Naive thymus-derived CD4-positive, alpha-beta T cell (primary cell): ENCODE measurements at regions of chr19 and their contacts with region 1.

Region 1: DNA sequence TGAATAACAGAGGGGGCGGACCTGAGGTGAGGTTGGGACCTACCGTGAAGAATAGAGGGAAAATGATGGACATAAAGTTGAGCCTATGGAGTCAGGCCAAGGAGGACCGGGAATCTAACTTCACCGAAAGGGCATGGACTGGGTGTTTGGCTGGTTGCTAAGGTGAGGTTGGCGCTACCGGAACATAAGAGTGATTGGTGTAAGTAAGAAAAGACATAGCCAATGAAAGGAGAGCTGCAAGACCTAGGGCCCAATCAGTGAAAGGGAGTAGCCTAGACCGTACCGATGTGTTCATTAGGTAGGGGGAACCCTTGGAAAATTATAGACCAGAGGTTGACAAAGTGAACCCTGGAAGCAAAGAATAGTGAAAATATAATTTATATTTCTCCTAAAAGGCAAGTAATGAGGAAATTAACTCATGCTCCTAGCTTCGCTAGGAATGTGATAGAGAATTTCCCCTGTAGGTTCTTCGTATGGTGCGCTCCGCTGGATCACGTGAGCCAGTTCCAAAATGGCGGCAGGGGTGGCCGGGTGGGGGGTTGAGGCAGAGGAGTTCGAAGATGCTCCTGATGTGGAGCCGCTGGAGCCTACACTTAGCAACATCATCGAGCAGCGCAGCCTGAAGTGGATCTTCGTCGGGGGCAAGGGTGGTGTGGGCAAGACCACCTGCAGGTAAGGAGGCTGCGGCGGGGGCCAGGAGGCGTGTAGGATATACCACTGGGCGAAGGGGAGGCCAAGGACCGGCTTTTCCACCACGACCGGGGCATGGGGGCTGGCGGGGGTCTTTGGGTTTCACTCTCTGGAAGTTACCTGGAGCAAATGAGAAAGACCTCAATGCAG is at the start of gene GET3:
- DNase-seq: peak; percentile 53 to 92 (median 86)
- ATAC-seq: peak; percentile 85
- H3K4me3 ChIP-seq: peak within 1 kb of the TSS; percentile 76
- H3K4me3 Mint-ChIP-seq: peak within 1 kb of the TSS; percentile 96 to 100 (median 99)
- H3K27ac ChIP-seq: peak within 1 kb of the TSS; percentile 93
- H3K27ac Mint-ChIP-seq: peak within 1 kb of the TSS; percentile 90 to 99 (median 97)
- H3K4me1 ChIP-seq: peaks cover 27 to 30% of the 10 kb centered on the region in 2 donors
- H3K4me1 Mint-ChIP-seq: peaks cover 29 to 42% (median 38%) of the 10 kb centered on the region in 7 donors
- H3K27me3 ChIP-seq: no peaks in the 10 kb centered on the region
- H3K27me3 Mint-ChIP-seq: no peaks in the 10 kb centered on the region
- total RNA-seq, gene GET3: 22.6 to 60.3 (median 27.0) TPM

Region 2: DNA sequence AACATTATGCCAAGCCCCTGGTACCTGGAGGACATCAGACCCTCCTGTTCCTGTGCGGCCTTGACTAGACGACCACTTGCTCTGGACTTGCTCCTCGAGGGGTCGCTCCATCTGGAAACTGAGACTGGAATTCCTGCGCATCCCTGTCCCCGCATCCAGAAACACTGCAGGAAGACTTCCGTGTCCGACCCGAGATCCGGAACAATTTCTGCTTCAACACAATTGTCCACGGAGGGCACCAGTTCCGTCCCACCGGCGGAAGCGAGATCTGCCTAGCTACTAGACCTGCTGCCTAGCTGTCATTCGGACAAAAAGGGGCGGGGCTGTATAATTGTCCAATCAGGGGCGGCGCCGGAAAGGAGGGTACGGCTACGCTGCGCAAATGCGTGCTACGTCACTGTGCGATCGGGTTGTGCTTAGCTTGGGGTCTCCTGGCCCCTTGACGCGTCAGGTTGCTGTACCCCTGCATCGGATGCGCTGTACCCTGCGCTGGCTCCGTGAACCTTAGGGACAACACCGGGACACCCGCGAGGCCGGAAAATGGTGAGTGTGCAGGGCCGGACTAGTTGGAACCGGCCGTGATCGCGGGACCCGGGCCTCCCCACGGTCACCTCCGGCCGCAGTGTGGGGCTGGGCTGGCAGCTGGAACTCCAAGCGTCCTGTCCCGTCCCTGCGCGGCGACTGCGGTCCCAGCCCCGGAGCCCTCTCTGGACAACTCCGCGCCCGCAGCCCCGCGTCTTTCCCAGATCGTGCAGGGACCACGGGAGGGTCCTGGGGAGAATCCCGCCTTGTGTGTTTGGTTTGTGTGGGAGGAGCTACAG is 126.5 kb before region 1 on chr19 and contains the starts of genes ZNF490 and ZNF791:
- CTCF ChIA-PET with region 1: no interaction called
- POLR2A ChIA-PET with region 1: interaction called, 3 read pairs
- intact Hi-C with region 1: loop called in 1 of 2 experiments (anchors 5 kb)
- DNase-seq: peak; percentile 81 to 97 (median 94)
- ATAC-seq: peak; percentile 94
- H3K4me3 ChIP-seq: peak within 1 kb of the TSS; percentile 71
- H3K4me3 Mint-ChIP-seq: peak within 1 kb of the TSS; percentile 94 to 100 (median 100)
- H3K27ac ChIP-seq: peak within 1 kb of the TSS; percentile 95
- H3K27ac Mint-ChIP-seq: peak within 1 kb of the TSS; percentile 97 to 100 (median 99)
- H3K4me1 ChIP-seq: peaks cover 24 to 41% of the 10 kb centered on the region in 2 donors
- H3K4me1 Mint-ChIP-seq: peaks cover 16 to 48% (median 36%) of the 10 kb centered on the region in 7 donors
- H3K27me3 ChIP-seq: no peaks in the 10 kb centered on the region
- H3K27me3 Mint-ChIP-seq: no peaks in the 10 kb centered on the region
- total RNA-seq, gene ZNF490: 10.3 to 14.9 (median 11.6) TPM
- total RNA-seq, gene ZNF791: 29.1 to 53.3 (median 38.7) TPM

Region 3: DNA sequence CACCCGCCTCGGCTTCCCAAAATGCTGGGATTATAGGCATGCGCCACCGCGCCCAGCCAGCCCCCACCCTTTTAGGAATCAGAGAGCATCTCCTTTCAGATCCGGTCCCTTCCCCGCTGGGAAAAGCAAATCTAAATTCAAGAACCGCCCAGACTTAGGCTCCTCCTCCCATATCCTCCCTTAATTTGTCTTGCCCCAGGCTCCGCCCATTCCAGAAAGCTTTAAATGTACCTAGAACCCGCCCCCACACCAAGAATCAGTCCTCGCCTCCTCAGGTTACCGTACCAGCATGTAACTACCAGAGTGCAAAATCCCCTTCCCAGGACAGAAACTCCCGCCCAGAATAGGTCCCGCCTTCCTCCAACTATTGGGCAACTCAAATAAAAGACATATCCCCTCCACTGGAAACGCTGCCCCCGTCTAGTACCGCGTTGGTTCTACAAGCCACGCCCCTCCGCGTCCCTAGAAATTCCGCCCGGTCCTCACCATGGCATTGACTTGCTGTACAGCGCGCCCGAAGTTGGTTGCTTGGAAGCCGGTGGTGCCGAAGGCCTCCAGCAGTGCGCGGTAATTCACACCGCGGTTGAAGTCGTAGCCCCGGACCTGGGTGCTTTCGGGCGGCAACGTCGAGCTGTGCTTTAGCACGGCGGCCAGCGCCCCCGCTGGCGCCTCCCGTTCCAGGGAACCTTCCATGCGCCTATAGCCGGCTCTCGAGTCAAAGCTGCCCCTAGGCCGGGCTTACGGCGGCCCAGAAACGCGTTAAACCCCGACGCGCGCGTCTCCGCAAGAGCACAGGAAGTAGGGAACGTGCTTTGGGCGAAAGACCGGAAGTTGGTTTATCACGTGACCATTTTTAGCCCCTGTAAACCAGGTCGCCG is 55.9 kb before region 1 on chr19 and contains the start of gene DHPS:
- CTCF ChIA-PET with region 1: no interaction called
- POLR2A ChIA-PET with region 1: interaction called, 6 read pairs
- intact Hi-C with region 1: loop called (anchors 1 kb)
- DNase-seq: peak; percentile 58 to 95 (median 93)
- ATAC-seq: peak; percentile 85
- H3K4me3 ChIP-seq: peak within 1 kb of the TSS; percentile 100
- H3K4me3 Mint-ChIP-seq: peak within 1 kb of the TSS; percentile 92 to 99 (median 96)
- H3K27ac ChIP-seq: peak within 1 kb of the TSS; percentile 95
- H3K27ac Mint-ChIP-seq: peak within 1 kb of the TSS; percentile 86 to 98 (median 94)
- H3K4me1 ChIP-seq: peaks cover 6 to 19% of the 10 kb centered on the region in 2 donors
- H3K4me1 Mint-ChIP-seq: peaks cover 18 to 34% (median 26%) of the 10 kb centered on the region in 7 donors
- H3K27me3 ChIP-seq: no peaks in the 10 kb centered on the region
- H3K27me3 Mint-ChIP-seq: no peaks in the 10 kb centered on the region
- total RNA-seq, gene DHPS: 125 to 223 (median 174) TPM

Region 4: GRCh38 chr19:12722566-12723380 is 14.4 kb before region 1 on chr19:
- CTCF ChIA-PET with region 1: interaction called, 9 read pairs
- POLR2A ChIA-PET with region 1: interaction called, 129 read pairs
- intact Hi-C with region 1: loop called (anchors 1 kb)
- DNase-seq: peak; percentile 66 to 97 (median 91)
- ATAC-seq: peak; percentile 96
- H3K4me3 ChIP-seq: peak overlapping the region; percentile 91
- H3K4me3 Mint-ChIP-seq: peak overlapping the region; percentile 86 to 96 (median 93)
- H3K27ac ChIP-seq: peak overlapping the region; percentile 85
- H3K27ac Mint-ChIP-seq: peak overlapping the region; percentile 89 to 97 (median 95)
- H3K4me1 ChIP-seq: peaks cover 11 to 16% of the 10 kb centered on the region in 2 donors
- H3K4me1 Mint-ChIP-seq: peaks cover 20 to 43% (median 38%) of the 10 kb centered on the region in 7 donors
- H3K27me3 ChIP-seq: no peaks in the 10 kb centered on the region
- H3K27me3 Mint-ChIP-seq: peaks cover 0 to 2% (median 0%) of the 10 kb centered on the region in 5 donors

Region 5: GRCh38 chr19:12777217-12778016 is 40.2 kb after region 1 on chr19:
- CTCF ChIA-PET with region 1: interaction called, 3 read pairs
- POLR2A ChIA-PET with region 1: interaction called, 5 read pairs
- intact Hi-C with region 1: loop called in 1 of 2 experiments (anchors 1 kb)
- DNase-seq: peak; percentile 69 to 89 (median 82)
- ATAC-seq: peak; percentile 18
- H3K4me3 ChIP-seq: peak overlapping the region; percentile 76
- H3K4me3 Mint-ChIP-seq: peak overlapping the region; percentile 82 to 95 (median 87)
- H3K27ac ChIP-seq: peak overlapping the region; percentile 94
- H3K27ac Mint-ChIP-seq: peak overlapping the region; percentile 42 to 98 (median 94)
- H3K4me1 ChIP-seq: peaks cover 16 to 28% of the 10 kb centered on the region in 2 donors
- H3K4me1 Mint-ChIP-seq: peaks cover 20 to 45% (median 39%) of the 10 kb centered on the region in 7 donors
- H3K27me3 ChIP-seq: no peaks in the 10 kb centered on the region
- H3K27me3 Mint-ChIP-seq: no peaks in the 10 kb centered on the region

Region 6: DNA sequence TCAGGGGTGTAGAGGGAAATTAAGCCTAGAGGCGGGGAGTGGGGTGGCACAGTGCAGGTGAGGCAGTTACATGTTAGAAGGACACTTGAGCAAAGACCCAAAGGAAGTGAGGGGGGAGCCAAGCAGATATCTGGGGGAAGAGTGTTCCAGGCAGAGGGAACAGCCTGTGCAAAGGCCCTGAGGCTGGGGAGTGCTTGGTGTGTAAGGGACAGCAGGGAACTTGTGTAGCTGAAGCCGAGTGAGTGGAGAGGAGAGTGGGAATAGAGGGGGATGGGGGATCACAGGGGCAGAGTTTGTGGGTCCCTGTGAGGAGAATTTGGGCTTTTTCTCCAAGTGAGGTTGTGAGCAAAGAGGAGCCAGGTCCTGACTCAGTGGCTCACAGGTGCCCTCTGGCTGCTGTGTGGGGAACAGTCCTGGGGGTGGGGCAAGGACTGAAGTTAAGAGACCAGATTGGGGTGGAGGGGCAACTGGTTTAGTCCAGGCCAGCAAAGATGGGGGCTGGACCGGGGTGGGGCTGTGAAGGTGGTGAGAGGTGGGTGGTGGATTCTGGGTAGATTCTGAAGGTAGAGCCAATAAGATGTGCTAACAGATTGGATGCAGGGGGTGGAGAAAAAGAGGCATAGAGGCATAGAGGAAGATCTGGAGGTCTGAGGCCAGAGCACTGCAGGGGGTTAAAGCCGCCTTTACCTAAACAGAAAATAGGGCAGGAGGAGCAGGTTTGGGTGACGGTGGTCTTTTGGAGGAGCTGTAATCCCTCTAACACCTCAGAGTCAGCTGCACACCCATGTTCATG is 693.8 kb after region 1 on chr19:
- CTCF ChIA-PET with region 1: no interaction called
- POLR2A ChIA-PET with region 1: no interaction called
- intact Hi-C with region 1: no loop called
- DNase-seq: peak; percentile 5 to 39 (median 26)
- ATAC-seq: peak; percentile 57
- H3K4me3 ChIP-seq: no peak overlapping the region
- H3K4me3 Mint-ChIP-seq: no peak overlapping the region
- H3K27ac ChIP-seq: no peak overlapping the region
- H3K27ac Mint-ChIP-seq: peak overlapping the region in 1 of 9 donors; percentile 80
- H3K4me1 ChIP-seq: no peaks in the 10 kb centered on the region
- H3K4me1 Mint-ChIP-seq: no peaks in the 10 kb centered on the region
- H3K27me3 ChIP-seq: peaks cover 0 to 4% of the 10 kb centered on the region in 2 donors
- H3K27me3 Mint-ChIP-seq: peaks cover 0 to 31% (median 26%) of the 10 kb centered on the region in 5 donors